ENCODE measurements at regions of chr17 and their contacts with region 1.

Region 1: DNA sequence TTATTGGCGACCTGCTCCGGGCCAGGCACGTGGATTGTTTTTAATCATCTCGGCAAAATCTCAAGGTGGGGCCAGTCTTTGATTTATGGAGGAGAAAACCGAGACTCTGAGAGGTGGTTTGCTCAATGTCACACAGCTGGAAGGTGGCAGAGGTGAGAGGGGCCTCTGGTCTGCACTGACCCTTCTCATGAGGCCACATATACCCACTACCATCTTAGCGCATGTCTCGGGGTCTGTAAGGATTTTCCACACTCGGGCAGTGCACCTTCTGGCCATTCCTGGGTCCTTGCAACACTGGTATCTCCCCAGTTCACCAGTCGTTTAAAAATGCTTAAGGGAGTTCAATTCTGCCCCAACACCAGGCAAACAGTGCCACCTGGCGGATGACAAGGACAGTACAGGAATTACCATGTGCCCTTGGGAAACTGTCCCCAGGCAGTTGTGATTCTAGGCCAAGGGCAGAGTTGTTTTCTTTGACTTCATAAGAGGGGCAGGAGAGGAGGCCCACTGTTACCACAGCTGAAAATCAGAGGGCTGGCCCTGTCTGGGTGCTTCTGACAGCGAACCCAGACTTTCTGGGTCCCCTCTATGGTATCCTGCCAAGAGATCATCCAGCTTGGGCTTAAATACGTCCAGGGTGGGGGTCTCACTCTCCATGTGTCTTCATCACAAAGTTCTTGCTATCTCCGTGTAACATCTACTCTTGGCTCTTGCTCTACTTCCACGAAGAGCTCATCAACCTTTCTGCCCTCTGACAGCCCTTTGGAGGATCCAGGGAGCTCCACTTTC is 39.4 kb upstream of the RAI1 start:
- DNase-seq: peak; percentile 70 to 85
- ATAC-seq: peak; percentile 85 to 96
- H3K4me3 ChIP-seq: no peak overlapping the region
- H3K27ac ChIP-seq: no peak overlapping the region
- H3K4me1 ChIP-seq: no peaks in the 10 kb centered on the region
- CTCF ChIP-seq: peak; percentile 97
- EP300 ChIP-seq: no peak
- POLR2A ChIP-seq: no peak
- RAD21 ChIP-seq: peak; percentile 97 to 99

Region 2: DNA sequence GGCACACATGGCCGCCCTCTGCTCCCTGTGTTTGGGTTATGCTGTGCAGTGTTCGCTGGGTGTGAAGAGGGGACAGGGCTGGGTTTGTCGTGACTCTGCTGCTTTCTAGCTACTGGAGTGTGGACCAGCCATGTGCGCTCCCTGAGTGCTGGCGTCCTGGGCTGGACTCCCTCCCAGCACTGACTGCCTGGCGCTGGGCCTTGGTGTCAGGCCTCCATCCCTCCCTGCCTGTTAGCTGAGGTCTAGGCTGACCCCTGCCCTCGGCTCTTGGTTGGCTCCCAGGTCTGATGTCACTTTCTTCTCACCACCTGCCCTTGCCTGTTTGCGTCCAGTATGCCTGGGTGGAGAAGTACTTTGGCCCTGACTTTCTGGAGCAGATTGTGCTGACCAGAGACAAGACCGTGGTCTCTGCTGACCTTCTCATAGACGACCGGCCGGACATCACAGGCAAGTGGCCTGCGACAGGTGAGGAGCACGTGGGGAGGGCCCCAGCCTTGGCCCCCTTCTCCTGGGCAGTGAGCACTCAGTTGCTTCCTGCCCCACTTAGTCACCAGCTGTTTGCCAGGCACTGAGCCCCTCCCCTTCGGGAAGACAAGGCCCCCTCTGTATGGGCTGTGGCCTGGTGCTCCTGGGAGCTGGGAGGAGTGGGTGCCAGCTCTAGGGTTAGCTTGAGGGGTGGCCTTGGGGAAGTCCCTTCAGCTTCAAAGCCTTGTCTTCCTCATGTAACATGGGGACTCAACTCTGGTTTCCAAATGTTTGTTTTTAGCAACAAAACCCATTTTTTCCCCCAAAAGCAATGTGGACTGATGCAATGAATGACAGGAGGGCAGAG is 297.1 kb before region 1 on chr17:
- CTCF ChIA-PET with region 1: interaction called, 25 read pairs
- POLR2A ChIA-PET with region 1: no interaction called
- DNase-seq: no peak
- ATAC-seq: no peak
- H3K4me3 ChIP-seq: no peak overlapping the region
- H3K27ac ChIP-seq: no peak overlapping the region
- H3K4me1 ChIP-seq: 0 out of 3 replicates have a peak, but pooled peaks cover 4% of the 10 kb centered on the region
- CTCF ChIP-seq: no peak
- EP300 ChIP-seq: no peak
- POLR2A ChIP-seq: no peak
- RAD21 ChIP-seq: no peak

Region 3: GRCh38 chr17:17376362-17376761 is 265.5 kb before region 1 on chr17:
- CTCF ChIA-PET with region 1: interaction called, 30 read pairs
- POLR2A ChIA-PET with region 1: no interaction called
- DNase-seq: no peak
- ATAC-seq: peak in 1 of 2 experiments; percentile 24; a peak in 1 of 6 replicates
- H3K4me3 ChIP-seq: no peak overlapping the region
- H3K27ac ChIP-seq: no peak overlapping the region
- H3K4me1 ChIP-seq: peaks cover 9% of the 10 kb centered on the region; the same call in 2 of the 3 replicates
- CTCF ChIP-seq: no peak
- EP300 ChIP-seq: no peak
- POLR2A ChIP-seq: no peak
- RAD21 ChIP-seq: no peak

Region 4: GRCh38 chr17:17462048-17462824 is 179.6 kb before region 1 on chr17:
- CTCF ChIA-PET with region 1: interaction called, 18 read pairs
- POLR2A ChIA-PET with region 1: no interaction called
- DNase-seq: no peak
- ATAC-seq: no peak
- H3K4me3 ChIP-seq: no peak overlapping the region
- H3K27ac ChIP-seq: no peak overlapping the region
- H3K4me1 ChIP-seq: no peaks in the 10 kb centered on the region
- CTCF ChIP-seq: no peak
- EP300 ChIP-seq: no peak
- POLR2A ChIP-seq: no peak
- RAD21 ChIP-seq: no peak

Region 5: GRCh38 chr17:17591355-17592298 is 50.2 kb before region 1 on chr17 and contains the start of gene PEMT:
- CTCF ChIA-PET with region 1: interaction called, 13 read pairs
- POLR2A ChIA-PET with region 1: no interaction called
- DNase-seq: peak; percentile 96 to 100
- ATAC-seq: peak; percentile 94 to 98
- H3K4me3 ChIP-seq: peak within 1 kb of the TSS; percentile 86
- H3K27ac ChIP-seq: peak within 1 kb of the TSS; percentile 89 to 94
- H3K4me1 ChIP-seq: peaks cover 16% of the 10 kb centered on the region
- CTCF ChIP-seq: no peak
- EP300 ChIP-seq: no peak
- POLR2A ChIP-seq: peak; percentile 78
- RAD21 ChIP-seq: no peak
- polyA plus RNA-seq, gene PEMT: 47.8 and 62.4 TPM in 2 replicates

Region 6: DNA sequence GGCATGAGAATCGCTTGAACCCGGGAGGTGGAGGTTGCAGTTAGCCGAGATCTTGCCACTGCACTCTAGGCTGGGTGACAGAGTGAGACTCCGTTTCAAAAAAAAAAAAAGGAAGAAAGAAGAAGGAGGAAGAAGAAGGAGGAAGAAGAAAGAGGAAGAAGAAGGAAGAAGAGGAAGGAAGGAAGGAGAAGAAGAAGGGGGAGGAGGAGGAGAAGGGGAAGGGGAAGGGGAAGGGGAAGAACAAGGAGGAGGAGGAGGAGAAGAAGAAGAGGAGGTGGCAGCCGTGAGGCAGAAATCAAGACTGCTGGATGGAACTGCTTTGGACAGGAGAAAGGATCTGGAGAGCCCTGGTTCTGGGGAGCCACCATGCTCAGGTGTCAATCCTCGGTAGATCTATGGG is 20.6 kb before region 1 on chr17:
- CTCF ChIA-PET with region 1: interaction called, 40 read pairs
- POLR2A ChIA-PET with region 1: no interaction called
- DNase-seq: no peak
- ATAC-seq: 0 out of 6 replicates have a peak, but pooled peaks of 1 of the 2 experiments have one; percentile 40
- H3K4me3 ChIP-seq: no peak overlapping the region
- H3K27ac ChIP-seq: no peak overlapping the region
- H3K4me1 ChIP-seq: no peaks in the 10 kb centered on the region
- CTCF ChIP-seq: no peak
- EP300 ChIP-seq: no peak
- POLR2A ChIP-seq: no peak
- RAD21 ChIP-seq: no peak

Region 7: GRCh38 chr17:17783116-17783824 is 141.5 kb after region 1 on chr17:
- CTCF ChIA-PET with region 1: no interaction called
- POLR2A ChIA-PET with region 1: no interaction called
- DNase-seq: no peak
- ATAC-seq: no peak
- H3K4me3 ChIP-seq: no peak overlapping the region
- H3K27ac ChIP-seq: peak overlapping the region in 1 of 2 experiments; percentile 85; a peak in 2 of 6 replicates
- H3K4me1 ChIP-seq: peaks cover 65% of the 10 kb centered on the region
- CTCF ChIP-seq: no peak
- EP300 ChIP-seq: no peak
- POLR2A ChIP-seq: no peak
- RAD21 ChIP-seq: no peak

Measured in A549 (cell line).